ENCODE measurements at regions of chr19 and their contacts with region 1.

Region 1: GRCh38 chr19:5790573-5791520 is at the start of gene DUS3L:
- DNase-seq: peak; percentile 95 to 98 (median 97)
- ATAC-seq: peak; percentile 97
- H3K4me3 ChIP-seq: peak within 1 kb of the TSS; percentile 59 to 97 (median 82)
- H3K27ac ChIP-seq: peak within 1 kb of the TSS; percentile 90 to 100 (median 96)
- H3K4me1 ChIP-seq: peaks cover 0 to 11% (median 6%) of the 10 kb centered on the region in 12 donors
- H3K27me3 ChIP-seq: no peaks in the 10 kb centered on the region
- CTCF ChIP-seq: no peak
- POLR2A ChIP-seq: peak in 1 of 2 donors; percentile 48
- total RNA-seq, gene DUS3L: 12.0 to 19.9 (median 15.3) TPM

Region 2: DNA sequence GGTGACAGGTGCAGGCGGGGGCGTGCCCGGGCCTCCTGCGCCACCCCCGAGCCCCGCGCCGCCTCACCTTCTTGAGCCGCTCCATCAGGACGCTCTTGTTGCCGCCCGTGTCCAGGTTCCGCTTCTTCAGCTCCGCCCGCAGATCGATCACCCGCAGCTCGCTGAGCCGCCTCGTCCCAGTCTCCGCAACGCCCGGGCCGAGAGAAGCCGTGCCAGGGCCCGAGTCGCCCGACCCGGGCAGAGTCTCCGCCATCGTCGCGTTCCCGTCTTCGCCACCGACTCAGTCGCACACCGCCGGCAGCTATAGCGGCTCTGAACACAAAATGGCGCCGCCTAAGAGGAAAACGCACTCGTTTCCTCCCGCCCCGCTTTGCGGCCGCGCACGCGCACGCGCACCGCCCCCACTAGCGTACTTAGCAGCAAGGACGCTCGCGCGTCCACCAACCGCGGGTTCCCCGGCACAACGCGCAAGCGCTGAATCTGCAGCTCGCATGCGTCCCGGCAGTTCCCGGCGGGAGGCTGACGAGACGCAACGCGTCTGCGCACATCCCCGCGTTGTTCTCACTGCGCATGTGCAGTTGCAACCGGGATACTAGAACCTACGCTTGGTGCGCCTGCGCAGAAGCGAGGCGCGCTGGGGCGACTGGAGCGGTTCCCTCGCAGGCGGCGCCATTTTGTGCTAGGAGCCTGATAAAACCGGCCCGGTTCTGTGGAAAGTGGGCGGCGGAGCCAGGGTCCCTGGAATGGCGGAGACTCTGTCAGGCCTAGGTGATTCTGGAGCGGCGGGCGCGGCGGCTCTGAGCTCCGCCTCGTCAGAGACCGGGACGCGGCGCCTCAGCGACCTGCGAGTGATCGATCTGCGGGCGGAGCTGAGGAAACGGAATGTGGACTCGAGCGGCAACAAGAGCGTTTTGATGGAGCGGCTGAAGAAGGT is 168.1 kb before region 1 on chr19 and contains the starts of genes SAFB and SAFB2:
- intact Hi-C with region 1: loop called in 1 of 10 experiments (anchors 5 kb)
- DNase-seq: peak; percentile 99 to 100 (median 100)
- ATAC-seq: peak; percentile 94 to 98 (median 96)
- H3K4me3 ChIP-seq: peak within 1 kb of the TSS; percentile 84 to 99 (median 96)
- H3K27ac ChIP-seq: peak within 1 kb of the TSS; percentile 93 to 98 (median 94)
- H3K4me1 ChIP-seq: peaks cover 14 to 81% (median 69%) of the 10 kb centered on the region in 12 donors
- H3K27me3 ChIP-seq: no peaks in the 10 kb centered on the region
- CTCF ChIP-seq: peak in 1 of 12 donors; percentile 15
- POLR2A ChIP-seq: peak; percentile 70 to 82
- total RNA-seq, gene SAFB: 22.3 to 59.6 (median 48.0) TPM
- total RNA-seq, gene SAFB2: 14.2 to 56.7 (median 44.2) TPM

Region 3: GRCh38 chr19:5719961-5720790 is 70.7 kb before region 1 on chr19 and contains the starts of genes CATSPERD and LONP1:
- intact Hi-C with region 1: loop called in 2 of 10 experiments (anchors 2 to 5 kb)
- DNase-seq: peak; percentile 98 to 99 (median 99)
- ATAC-seq: peak; percentile 97 to 98 (median 98)
- H3K4me3 ChIP-seq: peak within 1 kb of the TSS; percentile 73 to 99 (median 88)
- H3K27ac ChIP-seq: peak within 1 kb of the TSS; percentile 56 to 98 (median 94)
- H3K4me1 ChIP-seq: peaks cover 2 to 38% (median 22%) of the 10 kb centered on the region in 12 donors
- H3K27me3 ChIP-seq: no peaks in the 10 kb centered on the region
- CTCF ChIP-seq: peak; percentile 76 to 99 (median 93)
- POLR2A ChIP-seq: peak in 1 of 2 donors; percentile 46
- total RNA-seq, gene CATSPERD: not detected
- total RNA-seq, gene LONP1: 61.2 to 108 (median 88.6) TPM

Region 4: DNA sequence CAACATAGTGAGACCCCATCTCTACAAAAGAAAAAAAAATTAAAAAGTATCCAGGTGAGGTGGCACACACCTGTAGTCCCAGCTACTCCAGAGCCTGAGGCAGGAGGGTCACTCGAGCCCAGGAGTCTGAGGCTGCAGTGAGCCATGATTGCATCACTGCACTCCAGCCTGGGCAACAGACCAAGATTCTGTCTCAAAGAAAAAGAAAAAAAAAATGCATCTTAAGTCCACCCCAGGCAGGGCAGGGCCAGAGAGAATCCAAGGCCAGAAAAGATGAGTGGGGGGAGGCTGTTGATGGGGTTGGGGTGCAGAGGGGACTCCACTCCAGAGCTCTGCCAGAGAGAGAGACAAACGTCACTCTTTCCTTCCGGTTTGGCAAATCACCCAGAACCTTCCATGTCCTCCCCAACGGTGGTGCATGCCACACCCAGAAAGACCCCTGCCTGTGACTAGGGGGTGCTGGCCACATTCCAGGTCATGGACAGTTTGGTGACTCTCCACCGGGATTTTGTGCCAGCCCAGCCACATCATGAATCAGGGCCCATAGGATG is 60.0 kb after region 1 on chr19:
- intact Hi-C with region 1: no loop called
- DNase-seq: no peak
- ATAC-seq: peak in 1 of 4 donors; percentile 22
- H3K4me3 ChIP-seq: no peak overlapping the region
- H3K27ac ChIP-seq: no peak overlapping the region
- H3K4me1 ChIP-seq: peaks cover 0 to 4% (median 0%) of the 10 kb centered on the region in 12 donors
- H3K27me3 ChIP-seq: no peaks in the 10 kb centered on the region
- CTCF ChIP-seq: no peak
- POLR2A ChIP-seq: no peak

Region 5: DNA sequence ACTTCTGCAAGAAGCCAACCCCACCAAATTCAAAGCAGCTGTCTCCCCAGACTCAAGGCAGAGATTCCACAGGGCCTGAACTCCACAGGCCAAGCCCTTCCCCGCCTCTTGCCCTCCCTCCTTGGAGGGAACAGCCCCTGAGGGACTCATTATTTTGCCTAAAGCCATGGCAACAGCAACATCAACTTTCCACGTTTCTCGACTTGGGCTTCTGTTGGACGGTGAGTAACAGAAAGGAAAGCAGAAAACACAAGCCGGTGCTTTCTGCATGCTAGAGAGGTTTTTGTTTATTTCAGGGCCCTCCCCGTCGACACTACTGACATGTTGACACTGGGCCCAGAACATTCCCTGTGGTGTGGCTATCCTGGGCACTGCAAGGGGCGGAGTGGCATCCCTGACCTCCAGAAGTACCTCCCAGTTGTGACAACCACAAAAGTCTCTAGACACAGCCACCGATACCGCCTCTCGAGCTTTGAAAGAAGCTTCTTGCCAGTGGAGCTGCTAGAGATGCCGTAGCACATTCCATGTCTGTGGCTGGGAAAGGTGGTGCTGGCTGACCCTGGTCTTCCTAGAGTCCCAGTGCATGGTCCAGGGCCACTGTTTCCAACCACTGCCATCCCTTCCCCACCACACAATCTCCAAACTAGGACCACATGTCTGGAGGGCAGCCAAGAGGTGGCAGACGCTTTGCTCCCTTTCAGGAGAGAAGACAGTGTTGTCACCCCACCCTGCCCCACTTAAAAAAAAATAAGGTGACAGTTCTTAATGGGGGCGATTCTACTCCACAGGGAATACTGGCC is 136.0 kb after region 1 on chr19:
- intact Hi-C with region 1: no loop called
- DNase-seq: peak in 4 of 5 donors; percentile 59 to 78 (median 70)
- ATAC-seq: peak; percentile 78 to 86 (median 81)
- H3K4me3 ChIP-seq: peak overlapping the region in 1 of 12 donors; percentile 3
- H3K27ac ChIP-seq: peak overlapping the region; percentile 46 to 75 (median 56)
- H3K4me1 ChIP-seq: peaks cover 2 to 27% (median 17%) of the 10 kb centered on the region in 12 donors
- H3K27me3 ChIP-seq: no peaks in the 10 kb centered on the region
- CTCF ChIP-seq: no peak
- POLR2A ChIP-seq: no peak

Measured in heart left ventricle (tissue), 16 donors.